ENCODE measurements at regions of chr3 and their contacts with region 1.

Region 1: GRCh38 chr3:24500806-24501205 is 6.2 kb upstream of the THRB start:
- DNase-seq: no peak
- ATAC-seq: no peak
- H3K4me3 ChIP-seq: no peak overlapping the region
- H3K27ac ChIP-seq: no peak overlapping the region
- H3K4me1 ChIP-seq: peaks cover 6% of the 10 kb centered on the region; the same call in 1 of the 2 replicates
- H3K27me3 ChIP-seq: no peaks in the 10 kb centered on the region
- CTCF ChIP-seq: no peak
- EP300 ChIP-seq: no peak
- POLR2A ChIP-seq: no peak
- RAD21 ChIP-seq: no peak

Region 2: DNA sequence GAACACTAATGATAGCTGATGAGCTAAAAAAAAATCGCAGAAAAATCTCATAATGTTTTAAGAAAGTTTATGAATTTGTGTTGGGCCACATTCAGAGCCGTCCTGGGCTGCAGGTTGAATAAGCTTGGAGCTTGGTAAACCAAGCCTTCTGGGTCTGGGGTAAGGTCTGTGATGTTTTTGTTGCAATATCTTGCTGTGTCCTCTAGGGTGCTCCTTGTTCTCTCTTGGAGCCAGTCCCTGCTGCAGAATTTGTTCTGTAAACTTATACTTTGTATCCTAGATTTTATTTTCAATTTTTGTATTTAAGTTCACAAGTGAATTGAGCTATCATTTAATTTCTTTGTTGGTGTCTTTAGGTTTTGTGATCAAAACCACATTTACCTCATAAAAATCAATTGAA is 412.0 kb before region 1 on chr3:
- CTCF ChIA-PET with region 1: no interaction called
- POLR2A ChIA-PET with region 1: no interaction called
- in situ Hi-C with region 1: no loop called
- intact Hi-C with region 1: no loop called
- DNase-seq: peak; percentile 20
- ATAC-seq: peak; percentile 94
- H3K4me3 ChIP-seq: no peak overlapping the region
- H3K27ac ChIP-seq: no peak overlapping the region
- H3K4me1 ChIP-seq: peaks cover 22% of the 10 kb centered on the region
- H3K27me3 ChIP-seq: no peaks in the 10 kb centered on the region; a peak in 1 of 5 replicates
- CTCF ChIP-seq: peak; percentile 57
- EP300 ChIP-seq: no peak
- POLR2A ChIP-seq: no peak
- RAD21 ChIP-seq: 0 out of 2 replicates have a peak, but pooled peaks have one; percentile 18

Region 3: DNA sequence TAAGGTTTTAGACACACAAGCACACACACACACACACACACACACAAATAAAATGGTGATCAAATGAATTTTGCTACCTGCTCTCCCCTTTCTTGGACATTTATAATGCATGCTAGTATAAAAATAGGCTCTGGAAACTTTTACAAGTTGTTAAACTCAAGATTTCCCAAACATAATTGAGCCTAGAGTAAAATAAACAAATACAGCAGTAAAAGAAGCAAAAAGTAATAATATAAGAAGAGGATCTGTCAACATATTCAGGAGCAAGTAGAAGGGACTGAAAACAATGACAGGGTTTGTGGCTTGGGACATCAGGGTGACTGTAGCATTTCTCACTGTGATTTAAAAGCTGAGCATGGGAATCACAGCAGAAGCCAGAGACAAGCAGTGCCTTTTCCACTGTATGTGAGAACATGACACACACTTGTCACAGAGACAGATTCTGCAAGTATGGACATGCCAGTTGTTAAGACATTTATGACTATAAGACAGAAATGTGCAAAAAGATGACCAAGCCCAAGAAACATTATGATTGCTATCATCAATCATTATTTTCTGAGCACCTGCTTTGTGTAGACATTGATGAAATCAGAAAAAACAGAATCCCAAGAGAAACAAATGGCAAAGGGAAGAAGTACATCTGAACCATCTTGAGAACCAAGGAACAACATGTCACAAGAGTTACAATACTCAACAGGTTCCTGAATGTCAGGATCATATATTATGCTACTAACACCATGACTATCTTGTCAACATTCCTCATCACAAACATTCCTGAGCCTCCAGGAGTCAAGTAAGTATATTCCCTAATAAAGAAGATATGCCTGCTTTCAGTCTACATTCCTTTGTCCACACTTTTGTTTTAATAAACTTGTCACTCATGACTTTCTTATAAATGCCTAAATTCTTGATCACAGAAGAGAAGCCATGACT is 13.2 kb before region 1 on chr3:
- CTCF ChIA-PET with region 1: no interaction called
- POLR2A ChIA-PET with region 1: no interaction called
- in situ Hi-C with region 1: no loop called
- intact Hi-C with region 1: loop called (anchors 1 kb)
- DNase-seq: no peak
- ATAC-seq: no peak
- H3K4me3 ChIP-seq: no peak overlapping the region
- H3K27ac ChIP-seq: no peak overlapping the region
- H3K4me1 ChIP-seq: peaks cover 61% of the 10 kb centered on the region
- H3K27me3 ChIP-seq: no peaks in the 10 kb centered on the region
- CTCF ChIP-seq: no peak
- EP300 ChIP-seq: no peak
- POLR2A ChIP-seq: no peak
- RAD21 ChIP-seq: no peak